CD4-positive, alpha-beta memory T cell (primary cell): ENCODE measurements at regions of chr2 and their contacts with region 1.

Region 1: GRCh38 chr2:42169100-42169873 is at the start of gene EML4:
- DNase-seq: peak; percentile 82 to 94 (median 89)
- H3K4me3 ChIP-seq: peak within 1 kb of the TSS; percentile 71 to 81
- H3K4me3 Mint-ChIP-seq: peak within 1 kb of the TSS in 5 of 8 donors; percentile 48 to 71 (median 65)
- H3K27ac ChIP-seq: peak within 1 kb of the TSS; percentile 95
- H3K27ac Mint-ChIP-seq: peak within 1 kb of the TSS in 3 of 7 donors; percentile 84 to 95 (median 94)
- H3K4me1 ChIP-seq: peaks cover 29% of the 10 kb centered on the region
- H3K4me1 Mint-ChIP-seq: peaks cover 0 to 28% (median 14%) of the 10 kb centered on the region in 4 donors
- H3K27me3 ChIP-seq: no peaks in the 10 kb centered on the region
- H3K27me3 Mint-ChIP-seq: no peaks in the 10 kb centered on the region
- total RNA-seq, gene EML4: 168 to 172 TPM

Region 2: GRCh38 chr2:41840702-41841551 is 328.4 kb before region 1 on chr2:
- CTCF ChIA-PET with region 1: no interaction called
- POLR2A ChIA-PET with region 1: no interaction called
- intact Hi-C with region 1: loop called (anchors 2 kb)
- DNase-seq: peak; percentile 97 to 98 (median 97)
- H3K4me3 ChIP-seq: peak overlapping the region; percentile 85 to 86
- H3K4me3 Mint-ChIP-seq: peak overlapping the region; percentile 90 to 100 (median 96)
- H3K27ac ChIP-seq: peak overlapping the region; percentile 75
- H3K27ac Mint-ChIP-seq: peak overlapping the region; percentile 85 to 98 (median 94)
- H3K4me1 ChIP-seq: peaks cover 10% of the 10 kb centered on the region
- H3K4me1 Mint-ChIP-seq: peaks cover 5 to 16% (median 11%) of the 10 kb centered on the region in 4 donors
- H3K27me3 ChIP-seq: peaks cover 3% of the 10 kb centered on the region
- H3K27me3 Mint-ChIP-seq: peaks cover 11 to 16% of the 10 kb centered on the region in 2 donors

Region 3: GRCh38 chr2:42063431-42064171 is 105.7 kb before region 1 on chr2:
- CTCF ChIA-PET with region 1: no interaction called
- POLR2A ChIA-PET with region 1: no interaction called
- intact Hi-C with region 1: no loop called
- DNase-seq: no peak
- H3K4me3 ChIP-seq: no peak overlapping the region
- H3K4me3 Mint-ChIP-seq: no peak overlapping the region
- H3K27ac ChIP-seq: no peak overlapping the region
- H3K27ac Mint-ChIP-seq: no peak overlapping the region
- H3K4me1 ChIP-seq: no peaks in the 10 kb centered on the region
- H3K4me1 Mint-ChIP-seq: peaks cover 0 to 2% (median 0%) of the 10 kb centered on the region in 4 donors
- H3K27me3 ChIP-seq: peaks cover under 1% of the 10 kb centered on the region
- H3K27me3 Mint-ChIP-seq: peaks cover under 1 to 10% of the 10 kb centered on the region in 2 donors

Region 4: DNA sequence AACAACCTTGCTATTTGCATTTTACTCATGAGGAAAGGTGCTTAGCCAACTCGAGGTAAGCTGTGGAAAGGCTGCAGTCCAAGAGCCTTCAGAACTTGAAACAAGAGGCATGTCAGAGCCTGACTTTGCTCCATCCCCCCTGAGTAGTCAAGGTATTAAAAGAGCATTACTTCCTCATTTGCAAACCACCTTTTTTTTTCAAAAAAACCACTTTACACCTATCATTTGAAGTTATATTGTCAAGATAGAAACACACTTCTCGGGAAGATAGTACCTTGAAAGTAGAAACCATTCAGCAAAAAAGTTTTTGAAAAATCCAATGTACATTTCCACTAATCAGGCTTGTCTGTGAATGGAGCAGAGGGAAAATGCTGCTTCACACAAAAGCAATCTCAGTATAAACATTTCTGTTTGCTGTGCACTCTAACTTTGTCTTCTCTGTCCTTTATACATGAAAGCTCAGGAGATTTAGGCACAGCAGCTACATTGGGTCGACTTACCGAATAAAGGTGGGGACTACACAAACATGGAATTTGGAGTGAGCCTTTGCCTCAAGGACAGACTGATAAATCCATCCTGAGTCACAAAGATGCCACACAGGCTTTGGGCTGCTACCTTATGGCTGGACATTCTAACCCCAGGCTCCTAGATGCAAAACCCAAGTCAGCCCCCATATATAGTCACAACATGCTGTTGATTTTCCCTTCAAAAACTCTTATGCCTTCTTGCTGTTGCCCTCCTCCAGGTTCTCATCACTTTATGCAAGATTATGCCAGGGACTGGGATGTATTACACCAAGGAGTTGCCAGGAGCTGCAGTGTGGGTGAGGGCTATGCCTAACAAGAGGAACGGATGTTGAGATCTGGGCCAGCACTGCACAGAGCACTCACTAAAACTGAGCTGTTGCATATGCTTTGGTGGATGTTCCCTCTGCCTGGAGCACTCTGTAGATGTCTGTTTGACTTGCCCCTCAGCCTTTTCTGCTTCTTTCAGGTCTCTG is 41.6 kb before region 1 on chr2:
- CTCF ChIA-PET with region 1: interaction called, 16 read pairs
- POLR2A ChIA-PET with region 1: interaction called, 114 read pairs
- intact Hi-C with region 1: loop called (anchors 2 kb)
- DNase-seq: peak; percentile 61 to 71 (median 66)
- H3K4me3 ChIP-seq: peak overlapping the region in 1 of 2 donors; percentile 41
- H3K4me3 Mint-ChIP-seq: peak overlapping the region; percentile 36 to 81 (median 74)
- H3K27ac ChIP-seq: peak overlapping the region; percentile 52
- H3K27ac Mint-ChIP-seq: peak overlapping the region; percentile 88 to 100 (median 96)
- H3K4me1 ChIP-seq: peaks cover 97% of the 10 kb centered on the region
- H3K4me1 Mint-ChIP-seq: peaks cover 71 to 99% (median 88%) of the 10 kb centered on the region in 4 donors
- H3K27me3 ChIP-seq: no peaks in the 10 kb centered on the region
- H3K27me3 Mint-ChIP-seq: no peaks in the 10 kb centered on the region

Region 5: GRCh38 chr2:42141687-42142546 is 27.4 kb before region 1 on chr2:
- CTCF ChIA-PET with region 1: interaction called, 19 read pairs
- POLR2A ChIA-PET with region 1: interaction called, 73 read pairs
- intact Hi-C with region 1: no loop called
- DNase-seq: peak in 2 of 5 donors; percentile 36 to 55
- H3K4me3 ChIP-seq: peak overlapping the region in 1 of 2 donors; percentile 1
- H3K4me3 Mint-ChIP-seq: peak overlapping the region in 7 of 8 donors; percentile 27 to 80 (median 76)
- H3K27ac ChIP-seq: peak overlapping the region; percentile 40
- H3K27ac Mint-ChIP-seq: peak overlapping the region; percentile 86 to 95 (median 93)
- H3K4me1 ChIP-seq: peaks cover 65% of the 10 kb centered on the region
- H3K4me1 Mint-ChIP-seq: peaks cover 40 to 71% (median 56%) of the 10 kb centered on the region in 4 donors
- H3K27me3 ChIP-seq: no peaks in the 10 kb centered on the region
- H3K27me3 Mint-ChIP-seq: no peaks in the 10 kb centered on the region

Region 6: DNA sequence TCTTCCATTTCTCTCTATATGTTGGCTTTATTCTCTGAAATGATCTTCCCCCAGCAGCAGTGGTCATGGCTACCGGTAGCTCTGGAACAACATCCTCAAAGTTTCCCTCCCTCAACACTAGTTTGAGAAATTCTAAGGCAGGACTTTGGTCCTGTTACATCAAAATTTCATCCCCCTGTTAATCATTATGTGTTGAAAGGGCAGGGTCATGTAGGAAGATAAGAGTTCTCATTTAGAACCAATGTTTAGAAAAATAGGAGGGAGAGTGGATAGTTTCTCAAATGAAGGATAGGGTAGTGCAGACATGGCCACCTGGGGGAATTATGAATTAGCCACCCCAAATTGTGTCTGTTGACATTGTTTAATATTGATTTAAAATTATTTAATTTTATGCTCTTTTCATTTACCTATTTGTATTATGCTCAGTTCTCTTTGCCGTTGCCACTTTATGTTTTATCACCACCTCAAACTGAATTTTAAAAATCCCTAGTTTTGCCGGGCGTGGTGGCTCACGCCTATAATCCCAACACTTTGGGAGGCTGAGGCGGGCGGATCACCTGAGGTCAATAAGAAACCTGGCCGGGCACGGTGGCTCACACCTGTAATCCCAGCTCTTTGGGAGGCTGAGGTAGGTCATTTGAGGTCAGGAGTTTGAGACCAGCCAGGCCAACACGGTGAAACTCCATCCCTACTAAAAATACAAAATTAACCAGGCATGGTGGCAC is 22.2 kb after region 1 on chr2:
- CTCF ChIA-PET with region 1: interaction called, 8 read pairs
- POLR2A ChIA-PET with region 1: interaction called, 10 read pairs
- intact Hi-C with region 1: loop called (anchors 1 kb)
- DNase-seq: no peak
- H3K4me3 ChIP-seq: no peak overlapping the region
- H3K4me3 Mint-ChIP-seq: peak overlapping the region in 6 of 8 donors; percentile 10 to 67 (median 38)
- H3K27ac ChIP-seq: no peak overlapping the region
- H3K27ac Mint-ChIP-seq: peak overlapping the region; percentile 36 to 94 (median 68)
- H3K4me1 ChIP-seq: peaks cover 93% of the 10 kb centered on the region
- H3K4me1 Mint-ChIP-seq: peaks cover 52 to 89% (median 68%) of the 10 kb centered on the region in 4 donors
- H3K27me3 ChIP-seq: no peaks in the 10 kb centered on the region
- H3K27me3 Mint-ChIP-seq: no peaks in the 10 kb centered on the region

Region 7: GRCh38 chr2:42328148-42328833 is 159.0 kb after region 1 on chr2:
- CTCF ChIA-PET with region 1: interaction called, 10 read pairs
- POLR2A ChIA-PET with region 1: no interaction called
- intact Hi-C with region 1: loop called (anchors 1 kb)
- DNase-seq: peak in 4 of 5 donors; percentile 31 to 37 (median 33)
- H3K4me3 ChIP-seq: no peak overlapping the region
- H3K4me3 Mint-ChIP-seq: no peak overlapping the region
- H3K27ac ChIP-seq: no peak overlapping the region
- H3K27ac Mint-ChIP-seq: peak overlapping the region; percentile 0 to 85 (median 62)
- H3K4me1 ChIP-seq: no peaks in the 10 kb centered on the region
- H3K4me1 Mint-ChIP-seq: peaks cover 2 to 9% (median 5%) of the 10 kb centered on the region in 4 donors
- H3K27me3 ChIP-seq: no peaks in the 10 kb centered on the region
- H3K27me3 Mint-ChIP-seq: no peaks in the 10 kb centered on the region